T-cell (primary cell): ENCODE measurements at regions of chr12 and their contacts with region 1.

Region 1: DNA sequence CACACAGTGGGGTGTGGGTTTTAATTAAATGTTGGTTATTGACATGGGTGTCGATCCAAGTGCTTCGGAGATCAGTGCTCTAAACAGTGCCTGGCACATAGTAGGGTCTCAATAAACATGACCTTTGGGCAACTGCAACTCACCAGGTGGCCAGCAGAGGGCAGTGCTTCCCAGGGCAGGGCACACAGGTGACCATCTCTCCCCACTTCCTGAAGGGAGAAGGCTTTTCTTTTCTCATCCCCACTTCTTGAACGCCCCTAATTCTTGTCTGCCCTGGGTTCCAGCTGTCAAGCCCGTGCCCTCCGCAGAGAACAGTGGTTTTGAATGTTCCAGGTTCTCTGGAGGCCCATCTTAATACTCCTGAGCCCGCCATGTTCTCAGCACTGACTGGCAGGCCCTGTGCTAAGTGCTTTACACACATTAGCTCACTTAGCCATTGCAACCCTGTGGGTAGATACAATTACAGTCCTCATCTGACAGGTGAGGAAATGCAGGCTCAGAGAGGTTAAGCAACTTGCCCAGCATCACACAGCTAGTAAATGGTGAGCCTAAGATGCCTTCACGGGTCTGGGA is 16.3 kb downstream of the RAPGEF3 start:
- DNase-seq: peak in 31 of 35 experiments; percentile 26 to 81 (median 56)
- ATAC-seq: peak in 2 of 4 experiments; percentile 30 to 36
- H3K4me3 ChIP-seq: no peak overlapping the region
- H3K4me3 Mint-ChIP-seq: peak overlapping the region in 1 of 3 donors; percentile 42
- H3K27ac ChIP-seq: no peak overlapping the region
- H3K27ac Mint-ChIP-seq: peak overlapping the region in 1 of 2 donors; percentile 51
- H3K4me1 ChIP-seq: peaks cover 9 to 33% of the 10 kb centered on the region in 2 experiments
- H3K4me1 Mint-ChIP-seq: peaks cover 32 to 51% (median 39%) of the 10 kb centered on the region in 3 donors
- H3K27me3 ChIP-seq: peaks cover 0 to 35% of the 10 kb centered on the region in 2 experiments
- H3K27me3 Mint-ChIP-seq: no peaks in the 10 kb centered on the region

Region 2: DNA sequence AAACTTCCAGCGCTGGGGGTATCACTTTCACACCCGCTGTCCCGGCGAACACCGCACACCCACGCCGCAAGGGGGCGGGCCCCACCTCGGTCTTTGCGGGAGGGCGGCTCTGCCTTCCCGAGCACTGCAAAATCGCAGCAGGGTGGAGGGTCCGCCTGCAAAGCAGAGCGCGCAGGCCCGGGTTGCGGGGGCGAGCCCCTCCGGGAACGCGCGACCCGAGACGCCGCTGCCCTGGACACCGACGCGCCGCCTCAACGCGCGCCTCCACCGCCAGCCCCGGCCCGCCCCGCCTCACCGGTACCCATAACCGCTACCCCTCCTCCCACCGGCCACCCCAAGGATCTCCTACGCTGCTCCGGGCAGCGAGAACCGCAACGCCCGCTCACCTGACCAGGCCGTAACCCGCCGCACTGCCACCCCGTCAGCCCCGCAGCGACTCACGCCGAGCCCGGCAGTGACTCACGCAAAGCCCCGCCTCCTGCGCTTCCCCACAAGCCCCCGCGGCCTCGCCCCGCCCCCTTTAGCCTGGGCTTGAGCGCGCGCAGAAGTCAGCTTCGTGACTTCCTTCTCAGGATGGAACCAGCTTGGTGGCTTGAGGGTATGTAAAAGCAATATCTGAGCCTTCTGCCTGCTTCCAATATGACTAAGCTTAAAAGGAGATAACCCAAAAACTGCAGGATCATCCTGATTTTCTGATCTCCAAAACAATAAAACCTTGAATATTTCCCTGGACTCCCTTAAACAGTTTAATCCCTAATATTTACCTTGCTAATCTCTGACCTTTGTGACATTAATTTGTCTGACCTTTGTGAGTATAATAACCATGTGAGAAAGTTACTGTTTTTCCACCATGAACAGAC is 36.5 kb before region 1 on chr12 and contains the start of gene RPAP3:
- CTCF ChIA-PET with region 1: interaction called, 3 to 15 read pairs
- POLR2A ChIA-PET with region 1: interaction called in 1 of 2 experiments, 3 read pairs
- DNase-seq: peak; percentile 90 to 98 (median 95)
- ATAC-seq: peak; percentile 95 to 98 (median 96)
- H3K4me3 ChIP-seq: peak within 1 kb of the TSS; percentile 56 to 67
- H3K4me3 Mint-ChIP-seq: peak within 1 kb of the TSS; percentile 95 to 97 (median 97)
- H3K27ac ChIP-seq: peak within 1 kb of the TSS; percentile 67
- H3K27ac Mint-ChIP-seq: peak within 1 kb of the TSS; percentile 95 to 99
- H3K4me1 ChIP-seq: peaks cover 27 to 29% of the 10 kb centered on the region in 2 experiments
- H3K4me1 Mint-ChIP-seq: peaks cover 47 to 59% (median 47%) of the 10 kb centered on the region in 3 donors
- H3K27me3 ChIP-seq: no peaks in the 10 kb centered on the region
- H3K27me3 Mint-ChIP-seq: no peaks in the 10 kb centered on the region
- total RNA-seq, gene RPAP3: 24.0 to 33.5 (median 29.4) TPM

Region 3: GRCh38 chr12:47758834-47759690 is 16.7 kb after region 1 on chr12 and contains the start of gene RAPGEF3:
- CTCF ChIA-PET with region 1: interaction called, 13 to 34 read pairs
- POLR2A ChIA-PET with region 1: interaction called in 1 of 2 experiments, 3 read pairs
- DNase-seq: peak in 34 of 35 experiments; percentile 20 to 75 (median 48)
- ATAC-seq: peak; percentile 86 to 91 (median 87)
- H3K4me3 ChIP-seq: peak within 1 kb of the TSS; percentile 58 to 68
- H3K4me3 Mint-ChIP-seq: peak within 1 kb of the TSS; percentile 71 to 77 (median 73)
- H3K27ac ChIP-seq: no peak within 1 kb of the TSS
- H3K27ac Mint-ChIP-seq: peak within 1 kb of the TSS in 1 of 2 donors; percentile 34
- H3K4me1 ChIP-seq: peaks cover 0 to 38% of the 10 kb centered on the region in 2 experiments
- H3K4me1 Mint-ChIP-seq: peaks cover 24 to 33% (median 24%) of the 10 kb centered on the region in 3 donors
- H3K27me3 ChIP-seq: peaks cover 0 to 16% of the 10 kb centered on the region in 2 experiments
- H3K27me3 Mint-ChIP-seq: no peaks in the 10 kb centered on the region
- total RNA-seq, gene RAPGEF3: 0.25 to 0.99 (median 0.82) TPM

Region 4: GRCh38 chr12:47779301-47779942 is 37.1 kb after region 1 on chr12:
- CTCF ChIA-PET with region 1: interaction called, 12 to 13 read pairs
- POLR2A ChIA-PET with region 1: no interaction called
- DNase-seq: peak; percentile 75 to 96 (median 89)
- ATAC-seq: peak; percentile 86 to 93 (median 88)
- H3K4me3 ChIP-seq: no peak overlapping the region
- H3K4me3 Mint-ChIP-seq: no peak overlapping the region
- H3K27ac ChIP-seq: no peak overlapping the region
- H3K27ac Mint-ChIP-seq: peak overlapping the region; percentile 11 to 65
- H3K4me1 ChIP-seq: peaks cover 0 to 17% of the 10 kb centered on the region in 2 experiments
- H3K4me1 Mint-ChIP-seq: peaks cover 13 to 16% (median 14%) of the 10 kb centered on the region in 3 donors
- H3K27me3 ChIP-seq: peaks cover 0 to 3% of the 10 kb centered on the region in 2 experiments
- H3K27me3 Mint-ChIP-seq: no peaks in the 10 kb centered on the region

Region 5: GRCh38 chr12:47828608-47829536 is 86.5 kb after region 1 on chr12:
- CTCF ChIA-PET with region 1: interaction called, 6 to 53 read pairs
- POLR2A ChIA-PET with region 1: no interaction called
- DNase-seq: no peak
- ATAC-seq: no peak
- H3K4me3 ChIP-seq: no peak overlapping the region
- H3K4me3 Mint-ChIP-seq: peak overlapping the region in 1 of 3 donors; percentile 60
- H3K27ac ChIP-seq: peak overlapping the region; percentile 22
- H3K27ac Mint-ChIP-seq: peak overlapping the region; percentile 82 to 87
- H3K4me1 ChIP-seq: peaks cover 81 to 95% of the 10 kb centered on the region in 2 experiments
- H3K4me1 Mint-ChIP-seq: peaks cover 90 to 92% (median 91%) of the 10 kb centered on the region in 3 donors
- H3K27me3 ChIP-seq: no peaks in the 10 kb centered on the region
- H3K27me3 Mint-ChIP-seq: no peaks in the 10 kb centered on the region

Region 6: DNA sequence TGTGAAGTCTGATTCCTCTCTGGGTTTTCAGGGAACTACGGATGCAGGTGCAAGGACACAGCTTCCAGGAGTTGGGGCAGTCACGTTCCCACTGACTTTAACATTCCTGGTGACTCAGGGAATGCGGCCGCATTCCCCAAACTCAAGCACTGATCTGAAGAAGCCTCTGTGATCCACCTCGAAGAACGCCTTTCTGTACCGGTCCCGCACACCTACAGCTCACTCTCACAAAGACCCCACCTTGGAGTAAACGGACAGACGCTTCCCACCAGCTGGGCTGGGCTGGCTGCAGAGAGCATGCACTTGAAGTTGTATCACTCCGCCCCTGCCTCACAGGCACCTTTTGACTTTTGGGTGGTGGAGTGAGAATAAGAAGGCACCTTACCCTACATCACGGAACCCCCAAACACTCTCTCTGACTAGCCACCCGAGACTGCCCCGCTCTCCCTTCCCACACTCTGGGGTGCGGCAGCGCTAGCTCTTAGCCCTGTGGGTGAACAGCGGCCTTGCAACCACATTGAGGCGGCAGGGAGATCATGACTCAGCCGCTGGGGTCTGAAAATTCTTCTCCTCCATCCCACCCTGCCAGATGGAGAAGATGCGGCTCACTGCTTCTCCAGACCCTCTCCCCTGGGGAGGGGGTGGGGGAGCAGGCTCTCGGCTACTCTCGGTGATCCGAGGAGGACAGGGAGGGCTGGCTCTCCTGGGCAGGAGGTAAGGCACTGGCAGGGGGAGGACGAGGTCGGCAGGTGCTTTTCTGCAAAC is 101.1 kb after region 1 on chr12:
- CTCF ChIA-PET with region 1: interaction called, 67 to 78 read pairs
- POLR2A ChIA-PET with region 1: no interaction called
- DNase-seq: no peak
- ATAC-seq: no peak
- H3K4me3 ChIP-seq: no peak overlapping the region
- H3K4me3 Mint-ChIP-seq: no peak overlapping the region
- H3K27ac ChIP-seq: no peak overlapping the region
- H3K27ac Mint-ChIP-seq: no peak overlapping the region
- H3K4me1 ChIP-seq: no peaks in the 10 kb centered on the region
- H3K4me1 Mint-ChIP-seq: peaks cover 0 to 3% (median under 1%) of the 10 kb centered on the region in 3 donors
- H3K27me3 ChIP-seq: peaks cover 0 to 13% of the 10 kb centered on the region in 2 experiments
- H3K27me3 Mint-ChIP-seq: no peaks in the 10 kb centered on the region